ENCODE measurements at regions of chr16 and their contacts with region 1.

Region 1: DNA sequence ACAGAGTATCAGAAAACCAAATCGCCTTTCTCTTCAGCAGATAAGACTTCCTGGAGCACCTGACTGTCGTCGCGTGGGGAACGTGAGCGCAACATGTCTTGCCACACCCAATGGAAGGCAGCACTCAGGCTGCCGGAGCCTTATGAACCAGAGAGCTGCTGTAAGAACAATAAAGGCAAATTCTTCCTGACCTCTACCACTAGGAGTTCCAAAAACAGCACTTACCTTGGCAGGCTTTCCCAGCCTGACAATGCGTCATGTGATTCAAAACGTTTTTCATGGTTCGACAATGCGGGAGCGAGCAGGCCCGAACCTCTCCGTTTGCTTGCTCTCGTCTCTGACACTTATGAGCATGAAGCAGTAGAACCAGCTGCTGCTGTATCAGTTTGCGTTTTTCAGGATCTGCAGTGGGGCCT is 75.8 kb upstream of the TRAP1 start:
- DNase-seq: no peak
- H3K4me3 ChIP-seq: peak overlapping the region in 2 of 4 donors; percentile 1 to 9
- H3K27ac ChIP-seq: peak overlapping the region; percentile 56 to 72 (median 62)
- H3K4me1 ChIP-seq: peaks cover 43 to 69% (median 61%) of the 10 kb centered on the region in 4 donors
- H3K27me3 ChIP-seq: no peaks in the 10 kb centered on the region
- CTCF ChIP-seq: peak; percentile 8 to 37 (median 19)
- EP300 ChIP-seq: no peak
- POLR2A ChIP-seq: no peak

Region 2: GRCh38 chr16:3873482-3874173 is 80.5 kb after region 1 on chr16:
- intact Hi-C with region 1: loop called (anchors 5 kb)
- DNase-seq: no peak
- H3K4me3 ChIP-seq: no peak overlapping the region
- H3K27ac ChIP-seq: peak overlapping the region in 3 of 4 donors; percentile 29 to 62 (median 54)
- H3K4me1 ChIP-seq: peaks cover 89 to 100% (median 99%) of the 10 kb centered on the region in 4 donors
- H3K27me3 ChIP-seq: no peaks in the 10 kb centered on the region
- CTCF ChIP-seq: no peak
- EP300 ChIP-seq: no peak
- POLR2A ChIP-seq: no peak

Measured in esophagus muscularis mucosa (tissue), 4 donors.